ENCODE measurements at regions of chrX and their contacts with region 1.

Region 1: DNA sequence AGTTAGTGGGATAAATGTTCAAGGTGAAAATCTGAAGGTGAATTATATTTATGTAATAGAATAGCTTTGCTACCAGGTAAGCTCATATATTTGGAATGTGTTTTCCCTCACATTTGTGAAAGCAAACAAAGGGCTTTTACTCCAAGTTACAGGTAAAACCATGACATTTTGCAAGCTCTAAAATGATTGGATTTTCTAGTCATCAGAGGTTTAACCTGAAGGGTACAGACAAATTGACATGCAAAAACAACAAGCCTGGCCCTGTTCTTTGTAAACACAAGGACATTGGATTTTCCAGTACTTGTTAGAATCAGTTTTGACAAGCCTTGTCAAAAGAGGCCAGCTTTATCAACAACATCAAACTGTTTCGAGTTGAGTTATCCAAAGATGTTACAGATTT is 51.7 kb downstream of the ZFX start:
- DNase-seq: no peak
- ATAC-seq: no peak
- H3K4me3 ChIP-seq: no peak overlapping the region
- H3K27ac ChIP-seq: no peak overlapping the region
- H3K4me1 ChIP-seq: peaks cover 55% of the 10 kb centered on the region
- H3K27me3 ChIP-seq: no peaks in the 10 kb centered on the region
- CTCF ChIP-seq: no peak

Region 2: GRCh38 chrX:24117258-24117657 is 84.0 kb before region 1 on chrX:
- intact Hi-C with region 1: no loop called
- DNase-seq: no peak
- ATAC-seq: peak; percentile 58 to 86 (median 82)
- H3K4me3 ChIP-seq: peak overlapping the region; percentile 29
- H3K27ac ChIP-seq: peak overlapping the region; percentile 71
- H3K4me1 ChIP-seq: peaks cover 12% of the 10 kb centered on the region
- H3K27me3 ChIP-seq: no peaks in the 10 kb centered on the region
- CTCF ChIP-seq: no peak

Region 3: GRCh38 chrX:24184018-24184417 is 17.2 kb before region 1 on chrX:
- intact Hi-C with region 1: loop called in 1 of 2 experiments (anchors 2 kb)
- DNase-seq: no peak
- ATAC-seq: peak in 1 of 4 donors; percentile 28
- H3K4me3 ChIP-seq: no peak overlapping the region
- H3K27ac ChIP-seq: no peak overlapping the region
- H3K4me1 ChIP-seq: peaks cover 10% of the 10 kb centered on the region
- H3K27me3 ChIP-seq: no peaks in the 10 kb centered on the region
- CTCF ChIP-seq: no peak